MCF 10A (cell line): ENCODE measurements at regions of chr5 and their contacts with region 1.

Region 1: DNA sequence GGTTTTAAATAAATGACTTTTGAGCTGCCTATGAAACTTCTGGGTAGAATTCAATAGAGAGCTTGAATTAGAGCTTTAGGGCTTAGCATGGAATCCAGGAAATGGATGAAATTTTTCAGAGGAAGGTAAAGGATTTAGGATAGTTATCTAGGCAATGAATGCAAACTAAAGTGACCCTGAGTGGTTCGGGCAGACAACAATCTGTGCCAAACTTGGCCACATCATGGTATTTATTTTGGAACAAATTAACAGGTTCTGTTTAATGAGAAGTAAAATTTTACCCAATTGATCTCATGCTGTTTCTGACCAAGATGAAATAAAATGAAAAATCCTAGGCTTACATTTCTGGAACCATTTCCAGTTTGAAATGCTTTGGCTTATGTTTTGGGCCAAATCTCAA is 934.4 kb downstream of the MAT2B start:
- DNase-seq: no peak
- H3K4me3 Mint-ChIP-seq: no peak overlapping the region
- H3K27ac Mint-ChIP-seq: no peak overlapping the region
- H3K4me1 Mint-ChIP-seq: no peaks in the 10 kb centered on the region
- H3K27me3 Mint-ChIP-seq: no peaks in the 10 kb centered on the region
- CTCF ChIP-seq: no peak

Region 2: GRCh38 chr5:164148292-164148691 is 291.5 kb before region 1 on chr5:
- CTCF ChIA-PET with region 1: no interaction called
- POLR2A ChIA-PET with region 1: no interaction called
- intact Hi-C with region 1: loop called (anchors 10 kb)
- DNase-seq: no peak
- H3K4me3 Mint-ChIP-seq: no peak overlapping the region
- H3K27ac Mint-ChIP-seq: no peak overlapping the region
- H3K4me1 Mint-ChIP-seq: no peaks in the 10 kb centered on the region
- H3K27me3 Mint-ChIP-seq: no peaks in the 10 kb centered on the region
- CTCF ChIP-seq: no peak